ENCODE measurements at regions of chr5 and their contacts with region 1.

Region 1: GRCh38 chr5:140647042-140647341 is 438 bp downstream of the NDUFA2 start:
- DNase-seq: no peak
- ATAC-seq: peak; percentile 13
- H3K4me3 Mint-ChIP-seq: peak overlapping the region; percentile 97
- H3K27ac Mint-ChIP-seq: peak overlapping the region; percentile 98
- H3K4me1 Mint-ChIP-seq: peaks cover 26% of the 10 kb centered on the region
- H3K27me3 Mint-ChIP-seq: no peaks in the 10 kb centered on the region

Region 2: DNA sequence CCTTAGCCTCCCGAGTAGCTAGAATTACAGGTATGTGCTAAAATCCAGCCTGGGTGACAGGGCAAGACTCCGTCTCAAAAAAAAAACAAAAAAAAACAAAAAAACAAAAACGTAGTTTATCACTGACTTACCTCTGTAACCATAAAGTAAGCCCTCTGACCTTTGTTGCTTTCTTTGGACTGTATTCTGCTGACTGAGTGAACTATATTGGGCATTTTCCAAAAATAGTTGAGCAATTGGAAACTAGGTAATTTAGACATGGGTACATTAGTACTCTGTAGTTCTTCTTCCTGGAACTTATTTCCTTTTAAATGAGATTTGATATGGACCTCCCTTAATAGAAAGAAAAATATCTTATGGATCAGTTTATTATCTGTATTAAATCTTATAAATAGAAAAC is 178.8 kb before region 1 on chr5:
- POLR2A ChIA-PET with region 1: no interaction called
- DNase-seq: no peak
- ATAC-seq: no peak
- H3K4me3 Mint-ChIP-seq: no peak overlapping the region
- H3K27ac Mint-ChIP-seq: no peak overlapping the region
- H3K4me1 Mint-ChIP-seq: no peaks in the 10 kb centered on the region
- H3K27me3 Mint-ChIP-seq: no peaks in the 10 kb centered on the region

Region 3: DNA sequence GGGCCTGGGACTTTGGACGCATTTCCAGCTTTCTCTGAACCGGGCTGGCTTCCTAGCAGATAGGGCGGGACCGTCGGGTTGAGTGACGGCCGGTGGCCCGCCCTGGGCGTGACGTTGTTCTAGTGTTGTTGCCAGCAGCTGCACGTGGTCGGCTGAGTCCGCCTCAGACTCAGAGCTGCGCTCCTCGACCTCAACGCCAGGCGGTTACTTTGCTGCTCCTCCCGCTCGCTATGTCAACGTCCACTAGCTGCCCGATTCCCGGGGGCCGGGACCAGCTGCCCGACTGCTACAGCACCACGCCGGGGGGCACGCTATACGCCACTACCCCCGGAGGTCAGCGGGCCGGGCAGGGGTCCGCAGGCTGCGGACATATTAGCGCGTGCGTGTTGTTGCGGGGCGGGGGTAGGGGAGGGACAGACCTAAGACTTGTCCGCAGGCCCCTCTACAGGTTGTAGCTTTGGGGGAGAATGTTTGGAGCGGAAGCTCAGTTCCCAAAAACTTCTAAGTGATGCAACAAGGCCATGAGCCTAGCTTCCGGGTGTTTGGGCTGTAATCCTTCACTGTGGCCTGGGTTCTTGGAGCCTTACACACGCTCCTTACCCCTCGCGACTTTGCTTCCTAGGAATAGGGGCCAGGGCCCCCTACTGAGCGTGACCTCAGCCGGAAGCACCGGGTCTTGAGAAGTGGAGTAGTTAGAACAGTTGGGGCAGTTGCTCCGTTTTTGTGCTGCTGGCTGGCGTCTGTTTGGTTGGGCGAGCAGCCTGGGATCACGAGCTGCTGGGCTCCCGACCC is 99.3 kb before region 1 on chr5 and contains the start of gene EIF4EBP3:
- POLR2A ChIA-PET with region 1: interaction called, 17 read pairs
- DNase-seq: peak; percentile 86
- ATAC-seq: peak; percentile 96
- H3K4me3 Mint-ChIP-seq: peak within 1 kb of the TSS; percentile 87
- H3K27ac Mint-ChIP-seq: peak within 1 kb of the TSS; percentile 99
- H3K4me1 Mint-ChIP-seq: peaks cover 35% of the 10 kb centered on the region
- H3K27me3 Mint-ChIP-seq: no peaks in the 10 kb centered on the region
- total RNA-seq, gene EIF4EBP3: 11.8 to 12.0 TPM

Region 4: GRCh38 chr5:140576776-140577201 is 70.2 kb before region 1 on chr5:
- POLR2A ChIA-PET with region 1: no interaction called
- DNase-seq: no peak
- ATAC-seq: peak; percentile 82
- H3K4me3 Mint-ChIP-seq: no peak overlapping the region
- H3K27ac Mint-ChIP-seq: no peak overlapping the region
- H3K4me1 Mint-ChIP-seq: peaks cover 6% of the 10 kb centered on the region
- H3K27me3 Mint-ChIP-seq: peaks cover 13% of the 10 kb centered on the region

Region 5: DNA sequence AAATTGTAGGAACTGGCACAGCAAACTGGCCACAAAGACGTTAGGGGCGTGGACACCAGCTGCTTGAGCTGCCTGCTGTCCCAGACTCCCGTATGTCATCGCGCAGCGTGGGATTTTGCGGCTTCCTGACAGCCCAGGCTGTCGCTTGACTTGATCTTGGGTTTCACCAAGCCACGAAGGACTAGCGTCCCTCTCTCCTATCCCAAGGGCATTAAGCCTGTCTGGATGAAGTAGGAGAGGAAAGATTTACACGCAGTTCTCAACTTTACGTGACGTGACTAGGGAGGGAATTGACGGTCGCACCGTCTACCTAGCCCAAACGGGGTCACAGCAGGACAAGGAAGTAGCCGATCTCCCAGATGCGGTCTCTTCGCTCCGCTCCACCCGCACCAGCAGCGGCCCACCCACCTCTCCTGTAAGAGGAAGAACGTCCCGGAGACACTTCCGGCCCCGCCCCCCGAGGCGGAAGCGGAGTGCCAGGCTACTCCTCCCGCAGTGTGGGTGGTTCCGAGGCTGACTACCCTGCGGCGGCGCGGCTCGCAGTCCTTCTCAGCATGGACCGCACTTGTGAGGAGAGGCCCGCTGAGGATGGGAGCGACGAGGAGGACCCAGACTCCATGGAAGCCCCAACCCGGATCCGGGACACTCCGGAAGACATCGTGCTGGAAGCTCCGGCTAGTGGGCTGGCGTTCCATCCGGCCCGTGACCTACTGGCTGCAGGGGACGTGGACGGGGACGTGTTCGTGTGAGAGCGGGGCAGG is 17.5 kb after region 1 on chr5 and contains the start of gene WDR55:
- POLR2A ChIA-PET with region 1: interaction called, 38 read pairs
- DNase-seq: peak; percentile 96
- ATAC-seq: peak; percentile 94
- H3K4me3 Mint-ChIP-seq: peak within 1 kb of the TSS; percentile 99
- H3K27ac Mint-ChIP-seq: peak within 1 kb of the TSS; percentile 95
- H3K4me1 Mint-ChIP-seq: peaks cover 16% of the 10 kb centered on the region
- H3K27me3 Mint-ChIP-seq: no peaks in the 10 kb centered on the region
- total RNA-seq, gene WDR55: 41.8 to 45.4 TPM

Region 6: DNA sequence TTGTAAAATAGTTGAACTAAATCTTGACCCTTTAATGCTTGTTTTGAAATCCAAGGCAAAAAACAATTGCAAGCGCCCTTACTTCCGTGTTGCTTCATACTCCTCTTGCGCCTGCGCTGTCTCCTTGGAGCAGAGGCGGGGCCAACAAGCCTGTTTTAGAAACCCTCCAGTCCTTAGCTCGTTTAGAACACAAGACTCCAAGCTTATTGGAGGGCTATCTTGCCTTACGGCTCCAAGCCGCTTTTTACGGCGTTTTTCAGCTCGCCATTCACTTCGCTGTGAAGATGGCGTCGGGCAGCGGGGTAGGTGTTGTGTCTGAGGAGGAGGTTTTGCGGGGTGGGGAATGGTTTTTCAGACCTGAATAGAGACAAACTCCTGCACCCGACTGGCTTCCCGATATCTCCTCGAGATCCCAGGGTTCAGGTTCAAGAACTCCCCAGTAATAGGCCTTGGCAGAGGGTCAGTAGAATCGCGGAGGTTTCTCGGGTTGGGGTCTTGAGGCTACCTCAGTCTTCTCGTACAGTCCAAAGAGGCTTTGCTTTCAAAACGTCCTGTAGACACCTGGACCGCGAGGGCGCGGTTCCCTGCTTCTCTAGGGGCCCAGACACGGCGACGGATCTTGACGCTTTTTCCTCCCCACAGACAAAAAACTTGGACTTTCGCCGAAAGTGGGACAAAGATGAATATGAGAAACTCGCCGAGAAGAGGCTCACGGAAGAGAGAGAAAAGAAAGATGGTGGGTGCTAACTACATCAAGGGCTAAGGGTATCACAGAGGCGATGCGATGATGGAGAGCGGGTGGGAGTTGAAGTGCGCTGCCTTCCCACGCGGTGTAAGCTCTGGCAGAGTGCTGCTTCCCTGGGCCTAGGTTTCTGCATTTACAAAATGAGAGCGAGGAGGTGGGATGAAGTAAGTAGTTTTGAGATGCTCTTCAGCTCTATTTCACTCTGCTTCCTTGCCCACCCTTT is 53.5 kb after region 1 on chr5 and contains the start of gene ZMAT2:
- POLR2A ChIA-PET with region 1: interaction called, 22 read pairs
- DNase-seq: peak; percentile 82
- ATAC-seq: peak; percentile 99
- H3K4me3 Mint-ChIP-seq: peak within 1 kb of the TSS; percentile 97
- H3K27ac Mint-ChIP-seq: peak within 1 kb of the TSS; percentile 95
- H3K4me1 Mint-ChIP-seq: peaks cover 15% of the 10 kb centered on the region
- H3K27me3 Mint-ChIP-seq: no peaks in the 10 kb centered on the region
- total RNA-seq, gene ZMAT2: 54.7 to 57.8 TPM

Measured in activated naive CD8-positive, alpha-beta T cell treated with anti-CD3 and anti-CD28 coated beads, Interleukin-2, amount 10 ng/mL, durations not matched to agents 7 days and 5 days (primary cell).